ENCODE measurements at regions of chr1 and their contacts with region 1.

Region 1: DNA sequence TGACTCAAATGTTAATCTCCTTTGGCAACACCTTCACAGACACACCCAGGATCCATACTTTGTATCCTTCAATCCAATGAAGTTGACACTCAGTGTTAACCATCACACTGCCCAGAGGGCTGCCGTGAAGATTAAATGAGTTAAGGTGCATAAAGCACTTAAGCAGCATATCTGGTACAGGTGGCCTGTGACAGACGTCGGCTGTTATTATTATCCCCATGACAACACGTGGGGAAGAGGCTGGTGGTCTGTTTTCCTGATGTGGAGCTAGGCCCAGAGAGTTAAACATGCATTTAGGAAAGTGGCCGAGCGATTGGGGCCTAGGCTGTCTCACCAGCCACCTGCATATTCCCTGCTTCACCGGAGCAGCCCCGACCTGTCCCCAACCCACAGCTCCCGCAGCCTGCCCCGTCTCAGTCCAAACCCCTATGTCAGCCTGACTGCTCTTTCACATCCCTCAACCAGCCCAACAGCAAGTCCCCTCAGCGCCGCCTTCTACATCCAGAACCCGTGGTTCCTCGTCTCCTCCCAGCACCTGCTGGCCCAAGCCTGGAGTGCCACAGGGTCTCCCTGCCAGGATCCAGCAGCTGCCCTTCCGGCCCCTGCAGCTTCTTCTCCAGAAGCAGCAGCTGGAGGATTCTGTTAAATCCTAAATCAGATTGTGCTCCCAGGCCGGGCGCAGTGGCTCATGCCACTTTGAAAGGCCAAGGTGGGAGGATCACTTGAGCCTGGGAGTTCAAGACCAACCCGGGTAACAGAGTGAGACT is 77.9 kb downstream of the FBXO2 start:
- DNase-seq: no peak
- ATAC-seq: no peak

Region 2: DNA sequence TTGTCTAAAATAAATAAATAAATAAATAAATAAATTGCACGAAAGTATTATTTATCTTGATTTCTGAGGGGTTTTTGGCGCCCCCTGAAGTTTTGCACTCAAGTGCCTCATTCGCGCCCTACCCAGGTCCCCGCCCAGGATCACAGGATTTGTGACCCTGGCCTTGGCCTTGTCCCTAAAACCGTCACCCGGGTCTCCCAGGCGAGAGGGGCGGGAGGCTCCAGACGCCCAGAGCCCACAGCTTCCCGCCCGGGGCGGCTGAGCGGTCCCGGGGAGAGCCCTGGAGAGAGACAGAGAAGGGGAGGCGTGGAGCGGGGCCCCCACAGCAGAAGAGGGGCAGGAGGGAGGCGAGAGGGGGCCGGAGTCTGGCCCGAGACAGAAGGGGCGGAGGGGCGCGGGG is 688.0 kb before region 1 on chr1:
- intact Hi-C with region 1: loop called (anchors 5 kb)
- DNase-seq: no peak
- ATAC-seq: no peak